ENCODE measurements at regions of chr7 and their contacts with region 1.

Region 1: GRCh38 chr7:119175911-119176627 is 951.6 kb downstream of the ANKRD7 start:
- DNase-seq: peak; percentile 69
- H3K4me3 ChIP-seq: no peak overlapping the region
- H3K27ac ChIP-seq: no peak overlapping the region
- H3K4me1 ChIP-seq: no peaks in the 10 kb centered on the region
- CTCF ChIP-seq: peak; percentile 93

Region 2: GRCh38 chr7:118250860-118251494 is 925.1 kb before region 1 on chr7:
- CTCF ChIA-PET with region 1: no interaction called
- POLR2A ChIA-PET with region 1: no interaction called
- intact Hi-C with region 1: loop called (anchors 10 kb)
- DNase-seq: no peak
- H3K4me3 ChIP-seq: no peak overlapping the region
- H3K27ac ChIP-seq: no peak overlapping the region
- H3K4me1 ChIP-seq: no peaks in the 10 kb centered on the region
- CTCF ChIP-seq: peak; percentile 74

Region 3: GRCh38 chr7:118352854-118353453 is 823.1 kb before region 1 on chr7:
- CTCF ChIA-PET with region 1: no interaction called
- POLR2A ChIA-PET with region 1: no interaction called
- intact Hi-C with region 1: loop called (anchors 10 kb)
- DNase-seq: peak; percentile 29
- H3K4me3 ChIP-seq: no peak overlapping the region
- H3K27ac ChIP-seq: no peak overlapping the region
- H3K4me1 ChIP-seq: peaks cover 11% of the 10 kb centered on the region
- CTCF ChIP-seq: peak; percentile 68

Region 4: DNA sequence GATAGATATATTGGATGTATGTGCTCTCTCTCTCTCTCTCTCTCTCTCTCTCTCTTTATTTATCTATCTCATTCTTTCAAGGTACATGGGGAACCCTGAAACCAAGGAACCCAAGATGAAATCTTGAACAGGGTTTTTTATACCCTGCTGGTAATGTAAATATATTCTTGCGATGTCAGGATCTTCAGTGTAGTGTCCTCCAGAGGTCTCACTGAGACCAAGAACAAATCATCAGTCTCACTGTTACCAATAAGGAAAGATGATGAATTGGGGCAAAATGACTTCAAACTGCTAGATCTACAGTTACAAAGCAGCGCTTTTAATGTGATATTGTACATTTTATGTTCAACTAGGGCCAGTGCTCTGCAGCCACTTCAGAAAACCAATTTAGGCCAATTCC is 528.1 kb before region 1 on chr7:
- CTCF ChIA-PET with region 1: no interaction called
- POLR2A ChIA-PET with region 1: interaction called, 3 read pairs
- intact Hi-C with region 1: loop called (anchors 10 kb)
- DNase-seq: no peak
- H3K4me3 ChIP-seq: no peak overlapping the region
- H3K27ac ChIP-seq: no peak overlapping the region
- H3K4me1 ChIP-seq: no peaks in the 10 kb centered on the region
- CTCF ChIP-seq: no peak

Region 5: DNA sequence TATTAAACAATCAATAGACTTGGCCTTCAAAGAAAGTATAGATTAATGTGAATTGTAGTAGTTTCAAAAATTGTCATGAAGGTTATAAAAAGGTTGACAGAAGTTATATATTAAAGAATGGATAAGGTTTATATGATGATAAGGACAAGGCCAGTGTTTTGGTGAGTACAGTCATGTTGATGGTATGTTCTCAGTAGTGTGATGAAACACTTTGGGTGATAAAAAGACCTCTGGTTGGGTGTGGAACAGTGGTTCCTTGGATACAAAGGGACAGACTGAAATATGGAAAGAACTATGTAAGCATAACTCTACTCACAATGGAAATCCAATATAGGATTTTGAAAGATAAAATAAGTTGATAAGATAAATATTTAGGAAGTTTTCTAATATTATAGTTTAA is 85.2 kb before region 1 on chr7:
- CTCF ChIA-PET with region 1: no interaction called
- POLR2A ChIA-PET with region 1: no interaction called
- intact Hi-C with region 1: no loop called
- DNase-seq: no peak
- H3K4me3 ChIP-seq: no peak overlapping the region
- H3K27ac ChIP-seq: no peak overlapping the region
- H3K4me1 ChIP-seq: no peaks in the 10 kb centered on the region
- CTCF ChIP-seq: no peak

Measured in OCI-LY7 (cell line).